K562 (cell line): ENCODE measurements at regions of chr5 and their contacts with region 1.

Region 1: DNA sequence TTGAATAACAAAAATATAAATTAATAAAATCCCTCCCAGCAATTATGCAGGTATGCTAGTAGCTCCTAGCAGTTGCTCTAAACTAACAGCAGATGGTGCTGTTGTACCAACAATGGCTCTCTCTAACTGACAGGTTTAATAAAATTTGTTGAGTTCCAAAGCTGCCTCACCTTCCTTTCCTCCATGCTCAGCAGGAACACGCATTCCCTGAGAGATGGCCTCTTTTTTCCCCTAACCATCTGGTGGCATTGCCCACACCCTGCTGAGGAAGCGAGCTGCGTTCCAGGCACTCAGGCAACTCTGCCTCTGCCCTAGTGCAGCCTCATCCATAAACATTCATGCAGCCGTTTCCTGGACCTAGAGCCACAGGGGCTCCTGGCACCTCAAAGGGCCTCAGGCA is 106.2 kb downstream of the KLHL3 start:
- DNase-seq: peak; percentile 62 to 69 (median 64)
- ATAC-seq: peak; percentile 95
- H3K4me3 ChIP-seq: no peak overlapping the region
- H3K27ac ChIP-seq: no peak overlapping the region
- H3K4me1 ChIP-seq: no peaks in the 10 kb centered on the region
- H3K27me3 ChIP-seq: peaks cover 2 to 22% of the 10 kb centered on the region in 2 experiments; a peak in 4 of 5 replicates
- CTCF ChIP-seq: peak; percentile 75 to 90 (median 77)
- EP300 ChIP-seq: no peak
- POLR2A ChIP-seq: no peak
- RAD21 ChIP-seq: peak; percentile 83 to 93

Region 2: DNA sequence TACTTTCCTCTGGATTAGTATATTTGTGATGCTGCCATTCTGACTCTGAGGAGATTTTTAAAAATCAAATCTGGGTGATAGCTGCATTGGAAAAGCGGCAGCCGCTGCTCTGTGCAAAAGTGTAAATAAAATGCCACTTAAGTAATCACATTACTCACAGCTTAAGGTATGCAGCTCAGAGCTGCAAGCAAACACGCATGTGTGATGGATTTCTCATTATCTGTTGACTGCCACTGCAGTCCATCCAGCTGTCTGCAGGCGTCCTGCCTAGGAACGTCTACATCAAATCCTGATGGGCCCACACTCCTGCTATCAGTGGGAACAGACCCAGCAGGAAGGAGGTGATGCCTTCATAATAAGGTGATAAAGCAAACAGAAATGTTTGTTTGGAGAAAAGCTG is 347.4 kb before region 1 on chr5:
- CTCF ChIA-PET with region 1: no interaction called
- POLR2A ChIA-PET with region 1: no interaction called
- in situ Hi-C with region 1: no loop called
- intact Hi-C with region 1: no loop called
- DNase-seq: peak in 2 of 4 experiments; percentile 4 to 9
- ATAC-seq: no peak
- H3K4me3 ChIP-seq: no peak overlapping the region
- H3K27ac ChIP-seq: no peak overlapping the region
- H3K4me1 ChIP-seq: no peaks in the 10 kb centered on the region
- H3K27me3 ChIP-seq: peaks cover 4 to 20% of the 10 kb centered on the region in 2 experiments; a peak in 4 of 5 replicates
- CTCF ChIP-seq: no peak
- EP300 ChIP-seq: no peak
- POLR2A ChIP-seq: no peak
- RAD21 ChIP-seq: no peak

Region 3: GRCh38 chr5:137487600-137487999 is 142.0 kb before region 1 on chr5:
- CTCF ChIA-PET with region 1: no interaction called
- POLR2A ChIA-PET with region 1: no interaction called
- in situ Hi-C with region 1: no loop called
- intact Hi-C with region 1: no loop called
- DNase-seq: no peak
- ATAC-seq: no peak
- H3K4me3 ChIP-seq: no peak overlapping the region
- H3K27ac ChIP-seq: no peak overlapping the region
- H3K4me1 ChIP-seq: no peaks in the 10 kb centered on the region
- H3K27me3 ChIP-seq: no peaks in the 10 kb centered on the region
- CTCF ChIP-seq: no peak
- EP300 ChIP-seq: no peak
- POLR2A ChIP-seq: no peak
- RAD21 ChIP-seq: no peak

Region 4: GRCh38 chr5:137822158-137822764 is 192.6 kb after region 1 on chr5:
- CTCF ChIA-PET with region 1: no interaction called
- POLR2A ChIA-PET with region 1: no interaction called
- in situ Hi-C with region 1: no loop called
- intact Hi-C with region 1: loop called (anchors 10 kb)
- DNase-seq: peak; percentile 9 to 41 (median 28)
- ATAC-seq: peak; percentile 83
- H3K4me3 ChIP-seq: no peak overlapping the region
- H3K27ac ChIP-seq: no peak overlapping the region
- H3K4me1 ChIP-seq: no peaks in the 10 kb centered on the region
- H3K27me3 ChIP-seq: 0 out of 5 replicates have a peak, but pooled peaks cover 0 to 2% of the 10 kb centered on the region in 2 experiments
- CTCF ChIP-seq: peak; percentile 25 to 62 (median 56); a peak in 3 of 6 replicates
- EP300 ChIP-seq: no peak
- POLR2A ChIP-seq: no peak
- RAD21 ChIP-seq: peak in 1 of 2 experiments; percentile 54; a peak in 2 of 4 replicates

Region 5: DNA sequence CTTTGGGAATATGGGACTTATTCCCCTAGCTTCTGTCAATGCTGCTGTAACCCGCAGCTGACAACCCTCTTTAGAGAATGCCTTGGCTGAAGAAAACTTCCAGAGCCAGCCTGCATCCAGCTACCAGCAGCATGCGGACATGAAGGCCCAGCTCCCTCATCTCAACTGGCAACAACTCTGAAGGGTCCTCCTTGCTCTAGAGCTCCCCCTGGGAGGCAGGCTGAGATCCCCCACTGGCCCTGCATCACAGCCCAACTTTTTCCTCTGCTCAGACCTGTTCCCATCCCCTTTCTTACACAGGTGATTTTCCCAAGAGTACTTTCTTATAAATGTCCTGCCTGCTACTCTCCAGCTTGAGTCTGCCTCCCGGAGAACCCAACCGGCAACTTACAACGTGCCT is 435.5 kb after region 1 on chr5:
- CTCF ChIA-PET with region 1: interaction called, 4 read pairs
- POLR2A ChIA-PET with region 1: no interaction called
- in situ Hi-C with region 1: no loop called
- intact Hi-C with region 1: loop called (anchors 1 kb)
- DNase-seq: peak in 2 of 4 experiments; percentile 33 to 41
- ATAC-seq: peak; percentile 80
- H3K4me3 ChIP-seq: no peak overlapping the region
- H3K27ac ChIP-seq: no peak overlapping the region
- H3K4me1 ChIP-seq: peaks cover 0 to 3% of the 10 kb centered on the region in 2 experiments; a peak in 2 of 5 replicates
- H3K27me3 ChIP-seq: no peaks in the 10 kb centered on the region
- CTCF ChIP-seq: peak; percentile 68 to 76 (median 75)
- EP300 ChIP-seq: no peak
- POLR2A ChIP-seq: no peak
- RAD21 ChIP-seq: peak in 1 of 2 experiments; percentile 54; a peak in 2 of 4 replicates